ENCODE measurements at regions of chr20 and their contacts with region 1.

Region 1: GRCh38 chr20:50731055-50731871 is at the start of gene PARD6B:
- DNase-seq: peak; percentile 81
- H3K4me3 ChIP-seq: peak within 1 kb of the TSS; percentile 61
- CTCF ChIP-seq: no peak

Region 2: DNA sequence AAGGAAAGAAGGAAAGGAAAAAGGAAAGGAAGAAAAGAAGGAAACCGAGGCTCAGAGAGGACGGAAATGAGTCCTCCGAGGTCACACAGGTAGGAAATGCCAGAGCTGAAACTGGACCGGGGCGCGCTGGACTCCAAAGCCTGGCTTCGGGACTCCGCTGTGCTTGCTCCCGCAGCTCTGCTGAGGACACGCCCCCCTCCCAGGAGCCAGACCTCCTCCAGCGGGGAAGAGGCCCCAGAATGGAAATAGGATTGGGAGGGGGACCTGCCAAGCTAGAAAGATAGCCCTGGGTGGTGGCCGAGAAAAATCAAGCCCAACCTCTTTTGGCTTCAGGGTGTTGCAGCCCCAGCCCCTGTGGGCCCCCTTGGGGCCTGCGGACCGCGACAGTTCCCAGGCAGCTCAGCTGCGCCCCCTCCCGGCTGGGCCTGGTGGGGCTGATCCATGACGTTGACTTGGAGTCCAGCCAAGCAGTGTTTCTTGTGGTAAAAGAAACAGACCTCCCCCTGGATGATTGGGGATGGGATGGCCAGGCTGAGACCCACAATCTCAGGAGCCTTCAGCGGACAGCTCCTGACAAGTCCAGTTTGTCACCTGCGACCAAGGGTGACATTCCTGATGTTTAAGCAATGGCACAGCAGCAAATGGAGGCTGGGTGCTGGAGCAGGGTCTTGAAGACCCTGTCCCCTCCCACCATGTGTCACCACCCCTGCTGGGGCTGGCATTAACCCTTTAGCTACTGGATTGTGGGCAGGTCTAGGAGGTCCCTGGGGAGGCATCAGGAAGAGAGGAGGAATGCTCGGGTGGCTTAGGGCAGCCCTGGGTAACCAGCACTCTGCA is 95.4 kb before region 1 on chr20:
- in situ Hi-C with region 1: loop called (anchors 5 kb)
- DNase-seq: no peak
- H3K4me3 ChIP-seq: no peak overlapping the region
- CTCF ChIP-seq: peak; percentile 93

Region 3: DNA sequence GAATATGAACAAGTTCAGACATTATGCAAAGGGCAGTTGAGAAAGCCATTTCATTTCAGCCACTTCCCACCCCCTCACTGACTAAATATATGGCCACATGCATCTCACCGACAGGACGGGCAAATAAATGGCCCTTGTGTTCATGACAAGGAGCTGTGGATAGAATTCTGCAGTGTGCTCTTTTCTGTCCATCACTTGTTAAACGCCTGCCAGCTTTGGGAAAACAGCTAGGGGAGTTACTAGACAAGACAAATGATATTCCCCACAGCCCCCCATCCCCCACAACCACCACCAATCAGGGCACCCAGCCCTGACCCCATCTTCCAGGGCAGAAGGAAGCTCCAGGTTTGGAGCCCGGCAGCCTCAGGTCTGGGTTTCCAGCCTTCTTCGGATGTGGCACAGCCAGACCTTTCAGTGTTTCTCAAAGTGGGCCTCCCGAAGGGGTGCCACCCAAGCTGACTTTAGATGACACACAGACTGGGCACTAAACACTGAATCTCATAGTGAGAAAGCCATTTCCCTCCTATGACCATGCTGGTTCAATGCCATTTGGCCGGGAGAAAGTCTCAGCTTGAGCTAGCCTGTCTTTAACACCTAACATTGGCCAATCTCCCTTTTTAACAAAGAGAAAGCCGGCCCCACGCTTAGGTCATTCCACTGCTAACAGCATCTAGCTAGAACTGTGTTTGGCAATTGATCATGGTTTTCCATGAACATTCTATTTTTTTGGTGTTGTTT is 36.0 kb before region 1 on chr20:
- in situ Hi-C with region 1: loop called (anchors 5 kb)
- DNase-seq: no peak
- H3K4me3 ChIP-seq: no peak overlapping the region
- CTCF ChIP-seq: no peak

Region 4: DNA sequence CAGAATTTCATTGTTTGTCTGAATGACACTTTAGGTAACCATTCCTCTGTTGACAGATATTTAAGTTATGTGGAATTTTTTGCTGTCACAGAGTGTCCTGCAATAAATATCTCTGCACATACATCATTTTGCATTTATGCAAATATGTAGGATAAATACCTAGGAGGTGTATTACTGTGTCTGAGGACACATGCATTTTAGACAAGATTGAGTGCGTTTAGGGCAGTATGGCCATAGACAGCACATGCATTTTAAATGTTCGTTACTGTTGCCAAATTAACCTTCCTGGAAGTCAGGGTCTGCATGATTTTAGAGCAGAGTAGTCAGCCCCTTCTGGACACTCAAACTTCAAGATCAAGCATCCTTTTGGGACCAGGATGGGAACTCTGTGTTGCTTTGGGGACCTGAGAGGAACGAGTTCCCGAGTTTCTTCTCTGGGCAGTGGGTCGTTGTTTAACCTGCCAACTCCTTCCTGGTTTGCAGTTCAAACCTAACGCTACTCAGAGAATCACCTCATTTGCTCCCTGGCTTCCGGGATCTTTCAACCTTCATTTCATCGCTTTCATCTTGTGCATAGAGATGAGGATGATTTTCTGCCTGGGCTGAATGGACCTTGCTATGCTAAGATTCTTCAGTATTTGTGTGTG is 73.3 kb after region 1 on chr20:
- in situ Hi-C with region 1: no loop called
- DNase-seq: no peak
- H3K4me3 ChIP-seq: no peak overlapping the region
- CTCF ChIP-seq: no peak